ENCODE measurements at regions of chr5 and their contacts with region 1.

Region 1: GRCh38 chr5:15003511-15003920 is 131.9 kb upstream of the ANKH start:
- DNase-seq: peak; percentile 63
- ATAC-seq: peak; percentile 88

Region 2: GRCh38 chr5:14399054-14399692 is 604.3 kb before region 1 on chr5:
- intact Hi-C with region 1: no loop called
- DNase-seq: no peak
- ATAC-seq: peak; percentile 39

Region 3: DNA sequence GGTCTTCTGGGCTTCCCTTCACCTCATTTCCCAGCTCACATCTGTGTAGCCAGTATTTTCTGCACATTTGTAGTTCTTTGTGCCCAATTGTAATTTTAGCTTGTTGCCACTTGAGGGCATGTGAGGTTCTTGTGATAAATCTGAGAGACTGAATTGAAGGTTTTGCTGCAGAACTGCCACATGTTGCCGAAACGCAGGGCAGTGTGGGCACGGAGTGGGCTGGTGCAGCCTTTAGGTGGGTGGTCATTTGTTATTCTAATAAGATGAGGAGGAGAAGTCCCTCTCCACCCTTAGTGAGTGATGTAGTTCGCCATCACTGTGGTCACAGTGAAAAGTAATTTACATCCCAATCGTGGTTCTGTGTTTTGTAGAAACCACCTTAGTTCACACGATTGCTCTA is 317.8 kb before region 1 on chr5:
- intact Hi-C with region 1: loop called (anchors 10 kb)
- DNase-seq: no peak
- ATAC-seq: peak; percentile 37

Region 4: GRCh38 chr5:14727428-14727865 is 276.1 kb before region 1 on chr5:
- intact Hi-C with region 1: loop called (anchors 5 kb)
- DNase-seq: peak; percentile 85
- ATAC-seq: peak; percentile 73

Region 5: DNA sequence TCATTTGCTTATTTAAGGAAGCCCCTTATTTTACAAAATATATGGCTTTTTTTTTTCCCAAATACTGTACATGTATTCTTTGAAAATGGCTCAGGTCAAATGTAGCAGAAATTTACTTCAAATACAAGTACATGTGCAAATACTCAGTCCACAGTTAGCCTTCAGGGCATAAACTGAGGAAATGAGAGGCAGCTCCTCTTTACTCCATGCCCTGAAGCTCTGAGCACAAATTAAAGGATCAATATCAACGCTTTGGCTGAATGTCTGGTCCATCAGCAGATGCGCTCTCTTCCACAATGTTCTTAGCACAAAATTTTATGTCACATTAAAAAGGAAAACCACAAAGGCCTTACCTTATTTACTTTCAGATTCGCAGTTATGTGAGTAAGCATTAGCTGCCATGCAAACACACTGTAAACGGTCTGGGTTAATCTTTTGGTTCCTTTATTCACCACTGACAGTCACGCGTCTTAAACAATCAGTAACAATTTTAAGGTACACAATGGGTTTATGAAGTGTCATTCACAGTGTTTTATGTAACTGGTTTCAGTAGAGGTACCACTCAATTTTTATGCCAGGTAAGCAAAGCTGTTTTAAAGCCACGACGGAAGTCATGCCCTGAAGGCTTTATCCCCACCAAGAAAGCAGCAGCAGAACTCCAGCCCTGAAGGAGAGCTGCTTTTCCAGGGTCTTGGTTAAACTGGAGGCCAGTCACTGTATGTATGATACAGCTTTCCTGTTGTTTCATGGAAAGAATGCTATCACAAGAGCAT is 235.6 kb before region 1 on chr5:
- intact Hi-C with region 1: loop called (anchors 1 kb)
- DNase-seq: no peak
- ATAC-seq: no peak

Region 6: GRCh38 chr5:14871210-14872069 is 132.1 kb before region 1 on chr5 and contains the start of gene ANKH:
- intact Hi-C with region 1: loop called (anchors 10 kb)
- DNase-seq: peak; percentile 94
- ATAC-seq: peak; percentile 85
- total RNA-seq, gene ANKH: 166 TPM

Region 7: GRCh38 chr5:14946815-14947640 is 56.5 kb before region 1 on chr5:
- intact Hi-C with region 1: loop called (anchors 10 kb)
- DNase-seq: no peak
- ATAC-seq: peak; percentile 66

Region 8: DNA sequence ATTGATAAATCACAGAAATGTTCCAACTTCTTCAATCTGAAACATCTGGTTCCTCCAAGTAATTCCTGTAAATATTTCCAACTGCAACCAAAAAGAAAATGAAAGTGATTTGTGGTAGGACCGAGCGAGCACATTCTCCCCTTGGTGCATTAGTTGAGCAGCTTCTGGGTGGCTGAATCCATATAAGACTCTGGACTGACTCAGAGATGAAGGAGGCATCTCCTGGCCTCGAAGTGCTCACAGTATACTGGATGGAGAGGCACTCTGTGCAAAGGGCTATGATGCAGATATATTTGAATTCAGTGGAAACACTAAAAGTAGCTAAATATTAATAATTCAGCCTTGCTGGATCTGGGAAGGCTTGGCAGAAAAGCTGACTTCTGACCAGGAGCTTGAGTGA is 911.1 kb after region 1 on chr5:
- intact Hi-C with region 1: no loop called
- DNase-seq: no peak
- ATAC-seq: peak; percentile 70

Measured in left ventricle myocardium superior (tissue), 1 donor.